ENCODE measurements at regions of chr17 and their contacts with region 1.

Region 1: GRCh38 chr17:30939051-30939689 is 17.4 kb downstream of the ADAP2 start:
- DNase-seq: no peak
- H3K4me3 ChIP-seq: no peak overlapping the region
- H3K27ac ChIP-seq: no peak overlapping the region
- H3K4me1 ChIP-seq: no peaks in the 10 kb centered on the region
- H3K27me3 ChIP-seq: no peaks in the 10 kb centered on the region
- CTCF ChIP-seq: no peak

Region 2: DNA sequence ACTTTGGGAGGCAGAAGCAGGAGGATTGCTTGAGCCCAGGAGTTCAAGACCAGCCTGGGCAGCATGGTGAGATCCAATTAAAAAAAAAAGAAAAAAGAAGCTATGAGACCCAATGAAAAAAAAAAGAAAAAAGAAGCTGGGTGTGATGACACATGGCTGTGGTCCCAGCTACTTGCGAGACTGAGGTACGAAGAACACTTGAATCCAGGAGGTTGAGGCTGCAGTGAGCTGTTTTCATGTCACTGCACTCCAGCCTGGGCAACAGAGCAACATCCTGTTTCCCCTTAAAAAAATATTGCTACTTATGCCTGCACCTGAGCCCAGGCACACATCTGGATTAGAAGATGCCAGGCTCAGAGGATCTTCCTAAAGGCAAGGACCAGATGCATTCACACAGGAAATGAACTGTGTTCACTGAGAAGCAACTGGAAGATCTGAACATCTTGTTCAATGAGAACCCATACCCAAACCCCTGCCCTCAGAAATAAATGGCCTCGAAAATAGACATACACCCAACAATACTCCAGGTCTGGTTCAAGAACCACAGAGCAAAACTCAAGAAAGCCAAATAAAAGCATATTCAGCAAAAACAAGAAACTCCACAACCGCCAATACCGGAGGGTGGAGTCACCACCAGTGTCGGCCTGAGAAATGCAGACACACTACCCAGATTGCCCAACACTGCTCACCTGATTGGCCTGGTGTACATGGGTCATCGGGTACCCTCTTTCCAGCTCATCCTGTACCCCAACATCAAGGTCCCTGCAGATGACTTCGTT is 36.1 kb after region 1 on chr17:
- CTCF ChIA-PET with region 1: no interaction called
- dilution Hi-C with region 1: no loop called
- in situ Hi-C with region 1: no loop called
- intact Hi-C with region 1: no loop called
- DNase-seq: no peak
- H3K4me3 ChIP-seq: no peak overlapping the region
- H3K27ac ChIP-seq: no peak overlapping the region
- H3K4me1 ChIP-seq: peaks cover 2% of the 10 kb centered on the region
- H3K27me3 ChIP-seq: no peaks in the 10 kb centered on the region
- CTCF ChIP-seq: no peak

Region 3: GRCh38 chr17:31294820-31295488 is 355.8 kb after region 1 on chr17:
- CTCF ChIA-PET with region 1: no interaction called
- dilution Hi-C with region 1: loop called (anchors 5 kb)
- in situ Hi-C with region 1: no loop called
- intact Hi-C with region 1: no loop called
- DNase-seq: no peak
- H3K4me3 ChIP-seq: no peak overlapping the region
- H3K27ac ChIP-seq: no peak overlapping the region
- H3K4me1 ChIP-seq: no peaks in the 10 kb centered on the region
- H3K27me3 ChIP-seq: no peaks in the 10 kb centered on the region
- CTCF ChIP-seq: no peak

Measured in mammary epithelial cell (primary cell).